ENCODE measurements at regions of chr15 and their contacts with region 1.

Region 1: GRCh38 chr15:69081310-69082004 is 67.0 kb downstream of the NOX5 start:
- DNase-seq: peak; percentile 40
- ATAC-seq: peak; percentile 73
- H3K4me3 ChIP-seq: no peak overlapping the region
- H3K27ac ChIP-seq: peak overlapping the region; percentile 52; the same call in 1 of the 2 replicates
- H3K4me1 ChIP-seq: peaks cover 9% of the 10 kb centered on the region
- H3K27me3 ChIP-seq: peaks cover 15% of the 10 kb centered on the region
- CTCF ChIP-seq: no peak
- POLR2A ChIP-seq: no peak
- RAD21 ChIP-seq: no peak

Region 2: DNA sequence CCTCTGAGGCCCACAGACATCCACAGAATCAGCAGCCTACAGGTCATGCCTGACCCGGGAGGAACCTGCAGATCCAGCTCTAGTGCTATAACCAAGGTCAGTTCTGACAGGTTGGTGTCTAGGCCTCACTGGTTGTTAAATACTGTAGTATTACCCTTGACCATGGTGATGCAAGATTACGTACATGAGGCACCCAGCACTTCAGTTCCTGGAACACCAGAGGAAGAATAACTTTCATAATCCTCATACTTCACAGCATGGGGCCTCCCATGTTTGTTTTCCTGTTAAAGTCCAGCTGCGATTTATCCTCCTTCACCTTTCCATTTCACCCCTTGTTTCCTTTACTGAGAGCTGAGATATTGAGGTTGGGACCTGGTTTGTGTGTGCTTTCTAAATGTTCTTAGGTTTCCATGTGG is 44.6 kb after region 1 on chr15:
- CTCF ChIA-PET with region 1: interaction called, 3 read pairs
- POLR2A ChIA-PET with region 1: no interaction called
- dilution Hi-C with region 1: no loop called
- in situ Hi-C with region 1: no loop called
- intact Hi-C with region 1: loop called (anchors 5 kb)
- DNase-seq: peak; percentile 76
- ATAC-seq: peak; percentile 85
- H3K4me3 ChIP-seq: no peak overlapping the region
- H3K27ac ChIP-seq: peak overlapping the region; percentile 75; the same call in 1 of the 2 replicates
- H3K4me1 ChIP-seq: peaks cover 15% of the 10 kb centered on the region
- H3K27me3 ChIP-seq: peaks cover 20% of the 10 kb centered on the region
- CTCF ChIP-seq: no peak
- POLR2A ChIP-seq: no peak
- RAD21 ChIP-seq: no peak

Region 3: DNA sequence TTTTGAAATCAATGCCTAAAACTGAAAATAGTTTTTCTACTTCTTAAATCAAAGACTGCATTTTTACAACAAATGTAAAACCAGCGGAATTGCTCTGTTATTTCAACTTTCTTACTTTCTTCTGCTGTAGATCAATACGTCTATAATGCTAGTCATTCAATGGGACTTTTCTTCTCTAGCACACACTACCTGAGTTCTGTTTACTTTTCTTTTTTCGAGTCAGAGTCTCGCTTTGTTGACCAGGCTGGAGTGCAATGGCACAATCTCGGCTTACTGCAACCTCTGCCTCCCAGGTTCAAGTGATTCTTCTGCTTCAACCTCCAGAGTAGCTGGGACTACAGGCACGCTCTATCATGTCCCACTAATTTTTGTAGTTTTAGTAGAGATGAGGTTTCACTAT is 291.9 kb after region 1 on chr15:
- CTCF ChIA-PET with region 1: no interaction called
- POLR2A ChIA-PET with region 1: interaction called, 24 read pairs
- dilution Hi-C with region 1: no loop called
- in situ Hi-C with region 1: no loop called
- intact Hi-C with region 1: no loop called
- DNase-seq: no peak
- ATAC-seq: no peak
- H3K4me3 ChIP-seq: no peak overlapping the region
- H3K27ac ChIP-seq: no peak overlapping the region
- H3K4me1 ChIP-seq: no peaks in the 10 kb centered on the region
- H3K27me3 ChIP-seq: no peaks in the 10 kb centered on the region
- CTCF ChIP-seq: no peak
- POLR2A ChIP-seq: no peak
- RAD21 ChIP-seq: no peak

Measured in IMR-90 (cell line).